Breast epithelium (tissue), 4 donors: ENCODE measurements at regions of chr5 and their contacts with region 1.

Region 1: GRCh38 chr5:98975682-98976407 is 47.0 kb upstream of the CHD1 start:
- DNase-seq: no peak
- H3K4me3 ChIP-seq: no peak overlapping the region
- H3K27ac ChIP-seq: no peak overlapping the region
- H3K4me1 ChIP-seq: no peaks in the 10 kb centered on the region
- H3K27me3 ChIP-seq: no peaks in the 10 kb centered on the region
- CTCF ChIP-seq: no peak
- POLR2A ChIP-seq: no peak

Region 2: GRCh38 chr5:98179791-98180755 is 795.8 kb before region 1 on chr5:
- intact Hi-C with region 1: loop called (anchors 5 kb)
- DNase-seq: no peak
- H3K4me3 ChIP-seq: no peak overlapping the region
- H3K27ac ChIP-seq: no peak overlapping the region
- H3K4me1 ChIP-seq: no peaks in the 10 kb centered on the region
- H3K27me3 ChIP-seq: no peaks in the 10 kb centered on the region
- CTCF ChIP-seq: no peak
- POLR2A ChIP-seq: no peak